HepG2 (cell line): ENCODE measurements at regions of chr3 and their contacts with region 1.

Region 1: DNA sequence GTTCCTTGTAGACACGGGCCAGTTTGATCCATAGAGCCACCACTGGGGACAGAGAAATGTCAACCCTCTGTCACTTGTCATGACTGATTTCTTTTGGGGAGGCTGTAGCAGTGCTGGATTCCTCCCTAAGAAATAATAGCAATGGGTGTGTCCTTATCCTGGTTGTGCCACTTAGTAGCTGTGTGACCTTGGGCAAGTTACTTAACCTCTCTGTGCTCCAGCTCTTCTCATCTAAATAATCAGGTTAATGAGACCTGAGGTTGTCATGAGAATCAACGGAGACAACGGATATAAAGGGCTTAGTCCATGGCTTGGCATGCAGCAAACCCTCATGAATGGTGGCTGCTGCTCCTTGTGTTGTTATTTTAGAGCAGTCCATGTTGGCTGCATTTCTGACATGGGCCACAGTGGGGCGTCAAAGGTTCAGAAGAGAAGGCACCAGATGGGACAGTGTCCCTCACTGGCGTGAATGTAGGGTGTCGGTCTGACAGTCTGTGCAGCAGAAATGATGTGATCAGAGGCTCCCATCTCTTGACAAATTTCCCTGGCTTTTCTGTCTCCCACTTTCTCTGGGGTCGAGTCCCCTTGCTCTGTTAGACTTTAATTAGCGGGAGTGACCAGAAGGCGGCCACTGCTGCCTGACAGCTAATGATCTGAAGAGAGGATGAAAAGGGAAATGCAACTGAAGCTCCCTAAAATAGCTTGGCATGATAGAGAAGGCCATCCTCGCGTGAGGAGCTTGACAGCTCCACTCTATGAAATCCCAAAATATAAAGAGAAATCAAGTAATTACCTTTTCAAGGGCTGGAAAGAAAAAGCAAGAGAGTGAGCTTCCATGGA is 209.4 kb downstream of the CADPS start:
- DNase-seq: peak; percentile 63
- ATAC-seq: peak; percentile 97
- H3K4me3 ChIP-seq: no peak overlapping the region
- H3K27ac ChIP-seq: no peak overlapping the region
- H3K4me1 ChIP-seq: no peaks in the 10 kb centered on the region
- H3K27me3 ChIP-seq: no peaks in the 10 kb centered on the region; a peak in 1 of 5 replicates
- CTCF ChIP-seq: peak; percentile 89
- EP300 ChIP-seq: no peak
- POLR2A ChIP-seq: no peak
- RAD21 ChIP-seq: peak; percentile 89

Region 2: GRCh38 chr3:62803276-62803675 is 137.5 kb after region 1 on chr3:
- CTCF ChIA-PET with region 1: no interaction called
- POLR2A ChIA-PET with region 1: no interaction called
- in situ Hi-C with region 1: no loop called
- intact Hi-C with region 1: loop called (anchors 10 kb)
- DNase-seq: no peak
- ATAC-seq: peak; percentile 54; the same call in 2 of the 3 replicates
- H3K4me3 ChIP-seq: no peak overlapping the region
- H3K27ac ChIP-seq: no peak overlapping the region
- H3K4me1 ChIP-seq: no peaks in the 10 kb centered on the region
- H3K27me3 ChIP-seq: no peaks in the 10 kb centered on the region
- CTCF ChIP-seq: 0 out of 2 replicates have a peak, but pooled peaks have one; percentile 16
- EP300 ChIP-seq: no peak
- POLR2A ChIP-seq: no peak
- RAD21 ChIP-seq: no peak

Region 3: DNA sequence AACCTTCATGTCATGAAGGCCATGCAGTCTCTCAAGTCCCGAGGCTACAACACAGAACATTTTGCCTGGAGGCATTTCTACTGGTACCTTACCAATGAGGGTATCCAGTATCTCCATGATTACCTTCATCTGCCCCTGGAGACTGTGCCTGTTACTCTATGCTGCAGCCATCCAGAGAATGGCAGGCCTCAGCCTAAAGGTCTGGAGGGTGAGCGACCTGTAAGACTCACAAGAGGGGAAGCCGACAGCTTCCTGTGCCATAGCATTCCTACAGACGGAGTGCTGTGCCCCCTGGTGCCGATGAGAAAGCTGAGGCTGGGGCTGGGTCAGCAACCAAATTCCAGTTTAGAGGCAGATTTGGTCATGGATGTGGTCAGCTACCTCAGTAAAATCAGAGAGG is 260.7 kb after region 1 on chr3:
- CTCF ChIA-PET with region 1: no interaction called
- POLR2A ChIA-PET with region 1: no interaction called
- in situ Hi-C with region 1: no loop called
- intact Hi-C with region 1: loop called (anchors 2 kb)
- DNase-seq: no peak
- ATAC-seq: no peak
- H3K4me3 ChIP-seq: no peak overlapping the region
- H3K27ac ChIP-seq: no peak overlapping the region
- H3K4me1 ChIP-seq: no peaks in the 10 kb centered on the region
- H3K27me3 ChIP-seq: no peaks in the 10 kb centered on the region
- CTCF ChIP-seq: peak; percentile 38
- EP300 ChIP-seq: no peak
- POLR2A ChIP-seq: no peak
- RAD21 ChIP-seq: no peak

Region 4: GRCh38 chr3:63193629-63194028 is 527.8 kb after region 1 on chr3:
- CTCF ChIA-PET with region 1: interaction called, 12 read pairs
- POLR2A ChIA-PET with region 1: no interaction called
- in situ Hi-C with region 1: loop called (anchors 10 kb)
- intact Hi-C with region 1: loop called (anchors 1 kb)
- DNase-seq: peak; percentile 6
- ATAC-seq: no peak
- H3K4me3 ChIP-seq: no peak overlapping the region
- H3K27ac ChIP-seq: no peak overlapping the region
- H3K4me1 ChIP-seq: no peaks in the 10 kb centered on the region
- H3K27me3 ChIP-seq: no peaks in the 10 kb centered on the region
- CTCF ChIP-seq: peak; percentile 54
- EP300 ChIP-seq: no peak
- POLR2A ChIP-seq: no peak
- RAD21 ChIP-seq: no peak

Region 5: DNA sequence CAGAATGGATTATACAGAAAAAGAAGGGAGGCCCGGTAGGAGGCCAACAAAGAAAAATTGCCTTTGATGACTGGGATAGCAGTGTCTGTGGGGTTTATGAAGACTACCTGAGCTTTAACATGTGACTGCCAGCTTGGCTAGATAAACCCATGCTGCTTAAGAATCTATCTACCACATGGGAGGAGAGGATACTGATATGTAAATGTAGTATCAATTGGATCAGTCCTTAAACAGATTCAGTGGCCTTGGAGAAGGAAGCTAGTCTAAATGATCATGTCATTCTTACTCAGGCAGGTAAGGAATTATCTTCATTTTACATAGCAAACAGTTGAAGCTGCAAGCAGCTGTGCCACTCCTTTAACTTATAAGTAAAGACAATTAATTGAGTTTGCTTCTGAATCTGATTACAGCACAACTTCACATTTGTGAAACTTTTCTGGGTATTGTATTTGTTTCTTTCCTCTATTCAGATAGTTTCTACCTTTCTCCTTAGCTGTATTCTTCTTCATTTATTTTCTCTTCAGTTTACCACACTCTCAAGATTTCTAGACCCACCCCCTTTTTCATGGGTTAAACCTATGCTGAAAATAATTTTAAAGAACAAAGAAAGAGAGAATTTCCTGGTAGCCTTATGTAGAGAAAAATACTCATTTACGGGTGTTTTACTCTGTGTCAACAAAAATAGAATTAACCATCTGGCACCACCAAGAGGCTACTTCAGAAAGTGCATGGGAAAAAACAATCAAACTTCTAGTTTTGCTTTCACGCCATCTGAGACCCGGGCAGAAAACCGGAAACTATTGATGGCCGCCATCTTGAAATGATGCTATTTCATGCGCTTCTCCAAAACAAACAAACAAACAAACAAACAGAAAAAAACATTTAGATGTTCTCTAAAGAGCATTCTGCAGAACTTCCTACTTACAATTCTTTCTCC is 562.5 kb after region 1 on chr3:
- CTCF ChIA-PET with region 1: interaction called, 7 read pairs
- POLR2A ChIA-PET with region 1: no interaction called
- in situ Hi-C with region 1: no loop called
- intact Hi-C with region 1: loop called (anchors 2 kb)
- DNase-seq: peak; percentile 16
- ATAC-seq: peak; percentile 66
- H3K4me3 ChIP-seq: no peak overlapping the region
- H3K27ac ChIP-seq: no peak overlapping the region
- H3K4me1 ChIP-seq: no peaks in the 10 kb centered on the region
- H3K27me3 ChIP-seq: no peaks in the 10 kb centered on the region; a peak in 1 of 5 replicates
- CTCF ChIP-seq: peak; percentile 56
- EP300 ChIP-seq: no peak
- POLR2A ChIP-seq: no peak
- RAD21 ChIP-seq: no peak

Region 6: DNA sequence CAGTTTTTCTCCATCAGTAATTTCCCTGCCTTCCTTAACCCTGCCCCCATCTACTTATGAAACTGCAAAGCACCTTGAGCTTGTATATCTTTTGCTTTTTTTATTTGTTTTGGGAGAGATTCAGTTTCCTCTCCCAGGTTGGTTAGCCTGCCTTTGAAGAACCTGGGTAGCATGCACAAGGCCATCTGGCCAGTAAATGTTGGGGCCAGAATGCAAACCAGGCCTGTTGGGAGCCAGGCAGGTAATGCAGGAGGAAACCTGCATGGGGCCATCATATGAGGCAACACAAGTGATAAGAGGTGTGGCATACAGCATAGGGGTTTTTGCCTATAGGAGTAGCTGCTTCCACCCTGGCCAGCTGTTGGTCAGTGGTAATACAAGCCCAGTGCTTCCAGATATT is 630.0 kb after region 1 on chr3:
- CTCF ChIA-PET with region 1: no interaction called
- POLR2A ChIA-PET with region 1: no interaction called
- in situ Hi-C with region 1: no loop called
- intact Hi-C with region 1: no loop called
- DNase-seq: no peak
- ATAC-seq: no peak
- H3K4me3 ChIP-seq: no peak overlapping the region
- H3K27ac ChIP-seq: no peak overlapping the region
- H3K4me1 ChIP-seq: no peaks in the 10 kb centered on the region
- H3K27me3 ChIP-seq: no peaks in the 10 kb centered on the region
- CTCF ChIP-seq: no peak
- EP300 ChIP-seq: no peak
- POLR2A ChIP-seq: no peak
- RAD21 ChIP-seq: no peak